ENCODE measurements at regions of chr11 and their contacts with region 1.

Region 1: GRCh38 chr11:56841210-56841810 is 92.8 kb upstream of the OR9G4 start:
- DNase-seq: no peak

Region 2: GRCh38 chr11:56706486-56706885 is 134.8 kb before region 1 on chr11:
- intact Hi-C with region 1: no loop called
- DNase-seq: no peak

Region 3: GRCh38 chr11:56740107-56740506 is 101.2 kb before region 1 on chr11:
- intact Hi-C with region 1: no loop called
- DNase-seq: no peak

Region 4: GRCh38 chr11:57116654-57117053 is 275.3 kb after region 1 on chr11:
- intact Hi-C with region 1: loop called (anchors 10 kb)
- DNase-seq: no peak